CD14-positive monocyte (primary cell): ENCODE measurements at regions of chr6 and their contacts with region 1.

Region 1: DNA sequence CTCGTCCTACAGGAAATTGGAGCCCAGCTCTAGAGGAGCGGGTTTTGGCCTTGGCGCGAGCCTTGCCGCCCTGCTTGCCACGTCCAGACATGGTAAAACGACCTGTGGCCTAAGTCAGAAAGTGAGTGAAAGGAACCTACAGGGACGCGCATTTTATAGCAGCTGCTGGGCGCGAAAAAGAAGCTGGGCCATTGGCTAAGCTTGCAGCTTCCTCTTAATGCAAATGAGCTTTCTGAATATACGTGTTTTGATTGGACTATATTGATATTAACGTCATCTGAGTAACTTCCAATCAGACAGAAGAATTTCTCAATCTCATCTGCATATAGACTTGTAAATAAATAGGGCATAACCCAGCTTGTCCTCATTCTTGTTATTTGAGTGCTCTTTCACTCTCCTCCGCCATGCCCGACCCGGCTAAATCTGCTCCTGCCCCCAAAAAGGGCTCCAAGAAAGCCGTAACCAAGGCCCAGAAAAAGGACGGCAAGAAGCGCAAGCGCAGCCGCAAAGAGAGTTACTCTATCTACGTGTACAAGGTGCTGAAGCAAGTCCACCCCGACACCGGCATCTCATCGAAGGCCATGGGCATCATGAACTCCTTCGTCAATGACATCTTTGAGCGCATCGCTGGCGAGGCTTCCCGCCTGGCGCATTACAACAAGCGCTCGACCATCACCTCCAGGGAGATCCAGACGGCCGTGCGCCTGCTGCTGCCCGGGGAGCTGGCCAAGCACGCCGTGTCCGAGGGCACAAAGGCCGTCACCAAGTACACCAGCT is 18.9 kb downstream of the OR2B2 start:
- DNase-seq: peak; percentile 94 to 97 (median 94)
- H3K4me3 ChIP-seq: peak overlapping the region; percentile 84 to 99 (median 85)
- H3K4me3 Mint-ChIP-seq: no peak overlapping the region
- H3K27ac ChIP-seq: peak overlapping the region; percentile 61 to 73
- H3K27ac Mint-ChIP-seq: peak overlapping the region in 4 of 7 donors; percentile 93 to 98 (median 94)
- H3K4me1 ChIP-seq: peaks cover 60 to 75% of the 10 kb centered on the region in 2 donors
- H3K4me1 Mint-ChIP-seq: peaks cover 39% of the 10 kb centered on the region
- H3K27me3 ChIP-seq: no peaks in the 10 kb centered on the region
- H3K27me3 Mint-ChIP-seq: peaks cover 0 to 3% (median 0%) of the 10 kb centered on the region in 3 donors
- CTCF ChIP-seq: no peak

Region 2: DNA sequence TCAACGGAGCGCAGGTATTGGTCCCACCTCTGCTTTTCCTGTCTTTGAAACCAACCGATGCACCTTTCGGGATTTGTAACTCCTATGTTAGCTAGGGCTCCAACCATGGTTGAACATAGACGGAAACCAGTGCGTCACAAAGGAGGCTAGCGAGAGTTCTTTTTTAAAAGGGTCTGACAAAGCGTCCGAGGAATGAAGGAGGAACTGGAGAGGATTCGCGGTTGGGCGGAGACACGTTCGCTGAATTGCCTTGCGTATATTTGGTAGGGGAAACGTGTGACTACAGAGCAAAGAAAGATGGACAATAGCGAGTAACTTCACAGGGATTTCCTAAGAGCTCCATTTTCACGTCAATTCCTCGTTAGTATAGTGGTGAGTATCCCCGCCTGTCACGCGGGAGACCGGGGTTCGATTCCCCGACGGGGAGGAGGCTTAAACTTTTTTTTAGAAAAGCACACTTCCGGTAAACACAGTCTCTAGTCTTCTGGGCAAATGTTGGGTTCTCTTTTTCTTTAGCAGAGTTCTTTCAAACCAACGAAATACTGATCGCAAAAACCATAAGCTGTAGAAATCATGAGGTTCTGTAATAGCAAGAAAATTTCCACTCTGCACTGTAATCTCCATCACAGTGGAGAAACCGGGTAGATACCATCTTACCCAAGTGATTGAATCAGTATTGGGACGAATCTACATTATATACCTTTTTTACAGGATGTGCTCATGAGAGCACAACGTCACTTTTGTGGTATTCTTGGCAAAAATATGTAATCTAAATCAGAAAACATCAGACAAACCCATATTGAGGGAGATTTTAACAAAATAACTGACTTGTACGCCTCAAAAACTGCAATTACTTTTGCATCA is 413.7 kb before region 1 on chr6:
- intact Hi-C with region 1: loop called (anchors 5 kb)
- DNase-seq: peak; percentile 90 to 95 (median 93)
- H3K4me3 ChIP-seq: peak overlapping the region; percentile 97 to 100 (median 100)
- H3K4me3 Mint-ChIP-seq: no peak overlapping the region
- H3K27ac ChIP-seq: peak overlapping the region; percentile 96 to 100
- H3K27ac Mint-ChIP-seq: no peak overlapping the region
- H3K4me1 ChIP-seq: peaks cover 15 to 23% of the 10 kb centered on the region in 2 donors
- H3K4me1 Mint-ChIP-seq: no peaks in the 10 kb centered on the region
- H3K27me3 ChIP-seq: no peaks in the 10 kb centered on the region
- H3K27me3 Mint-ChIP-seq: peaks cover 0 to 5% (median 3%) of the 10 kb centered on the region in 3 donors
- CTCF ChIP-seq: no peak

Region 3: DNA sequence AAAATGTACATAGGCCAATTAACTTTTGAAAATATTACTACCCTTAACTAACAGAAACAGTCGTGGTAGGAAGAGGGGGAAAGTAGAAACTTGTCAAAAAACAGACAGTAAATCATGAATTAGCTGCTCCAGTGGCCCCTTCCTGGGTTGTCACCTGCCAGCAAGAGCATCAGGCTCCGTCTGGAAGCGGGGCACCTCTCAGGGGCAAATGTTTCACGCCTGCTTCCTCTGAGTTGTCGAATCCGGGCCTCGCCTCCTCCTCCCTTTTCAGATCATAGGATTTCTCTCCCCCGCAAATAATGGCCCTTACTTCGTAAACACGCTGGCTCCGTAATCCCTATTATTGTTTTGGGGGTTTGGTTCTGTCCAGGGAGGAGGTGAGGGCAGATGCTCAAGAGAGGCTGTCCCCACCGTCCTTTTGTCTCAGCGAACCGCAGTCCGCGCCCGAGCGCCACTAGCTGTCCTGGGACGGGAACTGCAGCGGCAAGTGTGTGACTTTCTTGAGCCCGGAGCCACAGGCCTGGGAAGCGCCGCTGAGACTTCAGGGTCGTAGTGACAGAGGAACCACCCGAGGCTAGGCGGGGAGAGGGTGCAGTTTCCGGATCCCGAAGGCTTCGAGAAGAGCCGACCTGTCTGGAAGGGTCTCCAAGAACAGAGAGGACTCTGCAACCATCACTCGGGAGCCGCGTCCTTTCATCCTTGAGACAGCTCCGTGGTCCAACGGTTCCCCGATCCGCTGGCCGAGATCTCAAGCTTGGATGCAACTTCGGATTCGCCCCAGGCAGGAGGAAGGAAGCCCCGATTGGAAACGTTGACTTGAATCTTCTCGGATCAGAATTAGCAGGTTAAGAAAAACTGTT is 205.9 kb before region 1 on chr6:
- intact Hi-C with region 1: loop called in 1 of 2 experiments (anchors 10 kb)
- DNase-seq: peak; percentile 51 to 62 (median 57)
- H3K4me3 ChIP-seq: peak overlapping the region; percentile 31 to 80 (median 47)
- H3K4me3 Mint-ChIP-seq: peak overlapping the region; percentile 93 to 95
- H3K27ac ChIP-seq: no peak overlapping the region
- H3K27ac Mint-ChIP-seq: peak overlapping the region in 2 of 7 donors; percentile 20 to 42
- H3K4me1 ChIP-seq: peaks cover 13 to 15% of the 10 kb centered on the region in 2 donors
- H3K4me1 Mint-ChIP-seq: peaks cover 18% of the 10 kb centered on the region
- H3K27me3 ChIP-seq: peaks cover 8 to 64% of the 10 kb centered on the region in 2 donors
- H3K27me3 Mint-ChIP-seq: peaks cover 54 to 73% (median 58%) of the 10 kb centered on the region in 3 donors
- CTCF ChIP-seq: peak; percentile 72

Region 4: GRCh38 chr6:27809939-27810767 is 83.1 kb before region 1 on chr6:
- intact Hi-C with region 1: loop called (anchors 5 kb)
- DNase-seq: peak; percentile 87 to 96 (median 91)
- H3K4me3 ChIP-seq: peak overlapping the region; percentile 62 to 87 (median 70)
- H3K4me3 Mint-ChIP-seq: peak overlapping the region; percentile 89 to 92
- H3K27ac ChIP-seq: peak overlapping the region; percentile 80 to 92
- H3K27ac Mint-ChIP-seq: peak overlapping the region; percentile 88 to 97 (median 94)
- H3K4me1 ChIP-seq: peaks cover 41 to 48% of the 10 kb centered on the region in 2 donors
- H3K4me1 Mint-ChIP-seq: peaks cover 49% of the 10 kb centered on the region
- H3K27me3 ChIP-seq: no peaks in the 10 kb centered on the region
- H3K27me3 Mint-ChIP-seq: peaks cover 0 to 4% (median 0%) of the 10 kb centered on the region in 3 donors
- CTCF ChIP-seq: no peak

Region 5: DNA sequence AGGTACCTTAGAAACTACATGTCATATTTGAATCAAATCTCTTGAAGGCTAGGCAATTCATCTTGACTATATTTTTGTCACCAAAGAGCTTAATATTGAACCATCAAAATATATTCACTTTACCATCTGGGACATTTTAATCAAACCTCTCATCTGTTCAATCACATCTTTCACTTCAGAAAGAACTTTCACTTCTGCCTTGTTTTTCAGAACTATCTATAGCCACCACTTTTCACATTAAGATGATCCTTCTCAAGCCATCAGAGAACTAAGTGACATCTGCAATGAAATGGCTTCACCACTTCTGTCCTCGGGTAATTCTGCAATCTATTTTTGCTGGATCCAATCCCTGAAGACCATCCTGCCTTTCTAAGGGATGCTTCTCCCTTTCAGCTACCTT is 38.8 kb before region 1 on chr6:
- intact Hi-C with region 1: no loop called
- DNase-seq: no peak
- H3K4me3 ChIP-seq: no peak overlapping the region
- H3K4me3 Mint-ChIP-seq: no peak overlapping the region
- H3K27ac ChIP-seq: no peak overlapping the region
- H3K27ac Mint-ChIP-seq: no peak overlapping the region
- H3K4me1 ChIP-seq: no peaks in the 10 kb centered on the region
- H3K4me1 Mint-ChIP-seq: peaks cover 3% of the 10 kb centered on the region
- H3K27me3 ChIP-seq: no peaks in the 10 kb centered on the region
- H3K27me3 Mint-ChIP-seq: peaks cover 0 to 4% (median 0%) of the 10 kb centered on the region in 3 donors
- CTCF ChIP-seq: no peak

Region 6: GRCh38 chr6:27864906-27865849 is 28.1 kb before region 1 on chr6:
- intact Hi-C with region 1: loop called in 1 of 2 experiments (anchors 2 kb)
- DNase-seq: peak; percentile 98 to 100 (median 99)
- H3K4me3 ChIP-seq: peak overlapping the region; percentile 65 to 78 (median 68)
- H3K4me3 Mint-ChIP-seq: peak overlapping the region; percentile 97 to 98
- H3K27ac ChIP-seq: peak overlapping the region; percentile 79 to 92
- H3K27ac Mint-ChIP-seq: peak overlapping the region; percentile 97 to 99 (median 99)
- H3K4me1 ChIP-seq: peaks cover 35 to 40% of the 10 kb centered on the region in 2 donors
- H3K4me1 Mint-ChIP-seq: peaks cover 44% of the 10 kb centered on the region
- H3K27me3 ChIP-seq: no peaks in the 10 kb centered on the region
- H3K27me3 Mint-ChIP-seq: peaks cover 0 to 4% (median 2%) of the 10 kb centered on the region in 3 donors
- CTCF ChIP-seq: no peak